Activated CD4-positive, alpha-beta T cell treated with anti-CD3 and anti-CD28 coated beads, Interleukin-2, amount 10 ng/mL, durations not matched to agents 7 days and 5 days (primary cell): ENCODE measurements at regions of chr11 and their contacts with region 1.

Region 1: DNA sequence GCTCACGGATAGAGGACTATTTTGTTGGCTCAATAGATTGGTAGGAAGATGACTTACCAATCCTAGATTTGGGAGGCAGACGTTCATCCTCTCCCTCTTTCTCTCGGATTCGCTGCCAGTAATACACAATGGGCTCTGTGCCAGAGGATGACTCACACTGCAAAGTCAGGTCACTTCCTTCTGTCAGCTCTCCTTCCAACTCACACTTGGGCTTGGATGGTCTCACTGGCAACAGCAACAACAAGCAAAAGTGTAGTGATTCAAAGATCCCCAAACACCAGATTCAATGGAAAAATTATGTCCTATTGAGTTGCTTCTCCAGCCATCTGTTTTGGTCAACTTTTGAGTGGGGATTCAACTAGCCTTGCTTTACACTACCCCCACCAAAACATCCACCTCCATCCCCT is 21.7 kb upstream of the HSPA8 start:
- DNase-seq: peak; percentile 75
- H3K4me3 Mint-ChIP-seq: no peak overlapping the region
- H3K27ac Mint-ChIP-seq: peak overlapping the region; percentile 77
- H3K4me1 Mint-ChIP-seq: peaks cover 64% of the 10 kb centered on the region
- H3K27me3 Mint-ChIP-seq: no peaks in the 10 kb centered on the region

Region 2: DNA sequence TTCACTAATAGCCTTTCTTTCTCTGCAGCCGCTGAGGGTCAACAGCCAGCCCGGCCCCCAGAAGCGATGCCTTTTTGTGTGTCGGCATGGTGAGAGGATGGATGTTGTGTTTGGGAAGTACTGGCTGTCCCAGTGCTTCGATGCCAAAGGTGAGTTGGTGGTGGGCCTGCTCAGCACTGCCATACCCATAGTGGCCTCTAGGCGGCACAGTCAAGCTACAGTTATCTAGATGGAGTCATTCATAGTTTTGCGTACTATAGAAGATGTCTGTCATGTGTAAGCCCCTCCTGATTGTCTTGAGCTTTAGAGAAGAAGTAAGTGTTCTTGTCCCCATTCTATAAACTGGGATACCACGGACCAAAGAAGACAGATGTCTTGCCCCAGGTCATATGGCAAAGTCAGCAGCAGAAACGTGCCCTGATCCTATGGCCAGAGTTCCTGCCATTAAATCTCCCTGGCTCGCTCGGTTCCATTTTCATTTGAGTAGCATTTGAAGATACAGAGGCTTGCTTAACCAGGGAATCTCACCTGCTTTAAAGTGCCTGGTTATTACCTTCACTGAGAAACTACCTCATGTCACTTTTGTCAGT is 287.4 kb before region 1 on chr11:
- CTCF ChIA-PET with region 1: no interaction called
- POLR2A ChIA-PET with region 1: no interaction called
- DNase-seq: peak; percentile 67
- H3K4me3 Mint-ChIP-seq: no peak overlapping the region
- H3K27ac Mint-ChIP-seq: no peak overlapping the region
- H3K4me1 Mint-ChIP-seq: no peaks in the 10 kb centered on the region
- H3K27me3 Mint-ChIP-seq: no peaks in the 10 kb centered on the region

Region 3: DNA sequence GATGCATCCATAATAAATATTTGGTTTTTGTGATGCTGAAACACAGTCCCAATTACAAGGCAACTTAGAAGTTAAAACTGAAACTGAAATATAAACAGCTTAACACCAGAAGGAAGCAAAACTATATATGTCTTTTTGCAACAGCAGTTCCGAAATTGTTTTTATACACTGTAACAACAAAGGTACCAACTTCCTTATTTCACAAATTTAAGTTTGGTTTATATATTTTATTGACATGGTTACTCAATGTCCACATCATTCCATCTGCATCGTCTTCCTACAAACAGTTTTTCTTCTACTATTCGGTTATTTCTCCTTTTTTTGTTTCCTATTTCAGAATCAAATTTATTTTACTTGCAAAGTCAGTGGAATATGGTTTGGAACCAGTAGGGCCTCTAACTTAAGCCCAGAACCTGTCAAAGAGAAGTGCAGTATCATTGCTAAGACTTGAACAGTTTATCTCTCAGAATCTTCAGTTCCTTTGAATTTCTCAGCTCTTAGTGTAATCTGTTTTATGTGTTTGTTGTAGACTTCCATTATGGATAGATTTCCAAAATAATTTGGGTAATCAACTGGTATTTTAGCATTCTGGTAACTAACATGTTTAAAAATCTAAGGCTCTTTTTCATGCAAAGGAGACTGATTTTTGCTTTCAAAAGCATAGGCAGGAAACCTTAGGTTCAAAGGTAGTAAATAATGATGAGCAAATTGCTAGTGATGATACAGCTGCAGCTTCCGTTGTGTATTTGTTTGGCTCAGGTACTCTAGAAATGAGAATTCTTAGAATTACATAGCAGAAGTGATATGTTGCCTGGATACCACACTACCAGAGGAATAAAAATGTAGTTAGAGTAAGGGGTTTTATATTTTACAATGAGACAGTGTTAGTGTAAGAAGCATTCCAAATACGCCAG is 13.5 kb before region 1 on chr11:
- CTCF ChIA-PET with region 1: interaction called, 23 read pairs
- POLR2A ChIA-PET with region 1: no interaction called
- DNase-seq: peak; percentile 61
- H3K4me3 Mint-ChIP-seq: peak overlapping the region; percentile 83
- H3K27ac Mint-ChIP-seq: peak overlapping the region; percentile 100
- H3K4me1 Mint-ChIP-seq: peaks cover 66% of the 10 kb centered on the region
- H3K27me3 Mint-ChIP-seq: no peaks in the 10 kb centered on the region

Region 4: DNA sequence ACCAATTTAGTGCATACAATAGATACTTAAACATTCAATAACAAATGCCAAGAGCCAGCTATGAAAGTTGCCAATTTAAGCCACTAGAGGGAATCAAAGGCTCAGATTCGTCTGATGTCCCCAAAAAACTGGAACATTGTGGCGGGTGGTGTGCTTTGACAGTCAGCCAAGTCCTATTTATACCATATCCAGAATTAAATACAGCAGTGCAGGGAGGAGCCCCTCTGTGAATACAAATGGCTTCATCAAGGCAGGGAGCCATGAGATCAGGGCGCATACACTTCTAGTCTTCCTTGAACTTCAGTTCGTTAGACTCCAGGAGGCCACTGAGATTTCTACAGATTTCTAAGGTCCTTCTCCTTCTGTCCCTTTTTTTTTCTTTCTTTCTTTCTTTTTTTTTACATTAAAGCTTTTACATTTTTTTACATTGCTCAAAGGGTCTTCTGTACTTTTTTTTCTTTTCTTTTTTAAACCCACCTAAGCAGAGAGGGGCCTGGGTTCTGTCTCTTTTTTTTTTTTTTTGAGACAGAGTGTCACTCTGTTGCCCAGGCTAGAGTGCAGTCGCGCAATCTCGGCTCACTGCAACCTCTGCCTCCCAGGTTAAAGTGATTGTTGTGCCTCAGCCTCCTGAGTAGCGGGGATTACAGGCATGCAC is 19.8 kb after region 1 on chr11:
- CTCF ChIA-PET with region 1: interaction called, 14 read pairs
- POLR2A ChIA-PET with region 1: no interaction called
- DNase-seq: peak; percentile 54
- H3K4me3 Mint-ChIP-seq: no peak overlapping the region
- H3K27ac Mint-ChIP-seq: no peak overlapping the region
- H3K4me1 Mint-ChIP-seq: peaks cover 34% of the 10 kb centered on the region
- H3K27me3 Mint-ChIP-seq: peaks cover 9% of the 10 kb centered on the region